ENCODE measurements at regions of chr1 and their contacts with region 1.

Region 1: GRCh38 chr1:111197598-111198284 is 2.7 kb downstream of the DENND2D start:
- DNase-seq: peak; percentile 70
- H3K4me3 Mint-ChIP-seq: peak overlapping the region; percentile 98
- H3K27ac Mint-ChIP-seq: peak overlapping the region; percentile 99
- H3K4me1 Mint-ChIP-seq: peaks cover 71% of the 10 kb centered on the region
- H3K27me3 Mint-ChIP-seq: no peaks in the 10 kb centered on the region

Region 2: GRCh38 chr1:110196917-110197765 is 1000.6 kb before region 1 on chr1:
- CTCF ChIA-PET with region 1: no interaction called
- intact Hi-C with region 1: no loop called
- DNase-seq: peak; percentile 65
- H3K4me3 Mint-ChIP-seq: no peak overlapping the region
- H3K27ac Mint-ChIP-seq: no peak overlapping the region
- H3K4me1 Mint-ChIP-seq: no peaks in the 10 kb centered on the region
- H3K27me3 Mint-ChIP-seq: no peaks in the 10 kb centered on the region

Region 3: GRCh38 chr1:110864287-110864686 is 333.5 kb before region 1 on chr1:
- CTCF ChIA-PET with region 1: no interaction called
- intact Hi-C with region 1: no loop called
- DNase-seq: no peak
- H3K4me3 Mint-ChIP-seq: no peak overlapping the region
- H3K27ac Mint-ChIP-seq: no peak overlapping the region
- H3K4me1 Mint-ChIP-seq: peaks cover 33% of the 10 kb centered on the region
- H3K27me3 Mint-ChIP-seq: no peaks in the 10 kb centered on the region

Region 4: DNA sequence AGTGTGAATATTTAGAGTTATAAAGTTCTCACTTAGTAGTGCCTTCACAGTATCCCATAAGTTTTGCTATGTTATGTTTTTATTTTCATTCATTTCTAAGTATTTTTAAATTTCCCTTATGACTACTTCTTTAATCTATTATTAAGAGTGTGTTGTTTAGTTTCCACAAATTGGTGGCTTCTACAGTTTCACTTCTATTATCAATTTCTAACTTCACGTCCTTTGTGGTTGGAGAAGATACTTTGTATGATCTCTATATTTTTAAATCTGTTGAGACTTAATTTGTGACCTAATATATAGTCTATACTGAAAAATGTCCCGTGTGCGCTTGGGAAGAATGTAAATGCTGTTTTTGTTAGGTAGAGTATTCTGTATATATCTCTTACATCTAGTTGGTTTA is 104.6 kb after region 1 on chr1:
- CTCF ChIA-PET with region 1: no interaction called
- intact Hi-C with region 1: no loop called
- DNase-seq: no peak
- H3K4me3 Mint-ChIP-seq: no peak overlapping the region
- H3K27ac Mint-ChIP-seq: no peak overlapping the region
- H3K4me1 Mint-ChIP-seq: peaks cover 2% of the 10 kb centered on the region
- H3K27me3 Mint-ChIP-seq: no peaks in the 10 kb centered on the region

Region 5: GRCh38 chr1:111334169-111334568 is 136.4 kb after region 1 on chr1:
- CTCF ChIA-PET with region 1: interaction called, 17 read pairs
- intact Hi-C with region 1: no loop called
- DNase-seq: peak; percentile 76
- H3K4me3 Mint-ChIP-seq: no peak overlapping the region
- H3K27ac Mint-ChIP-seq: no peak overlapping the region
- H3K4me1 Mint-ChIP-seq: no peaks in the 10 kb centered on the region
- H3K27me3 Mint-ChIP-seq: no peaks in the 10 kb centered on the region